MCF 10A (cell line): ENCODE measurements at regions of chrX and their contacts with region 1.

Region 1: GRCh38 chrX:139932901-139933796 is at the start of gene ATP11C:
- DNase-seq: peak; percentile 85
- H3K4me3 Mint-ChIP-seq: peak within 1 kb of the TSS; percentile 76
- H3K27ac Mint-ChIP-seq: peak within 1 kb of the TSS; percentile 90
- H3K4me1 Mint-ChIP-seq: peaks cover 4% of the 10 kb centered on the region
- H3K27me3 Mint-ChIP-seq: no peaks in the 10 kb centered on the region
- CTCF ChIP-seq: no peak
- total RNA-seq, gene ATP11C: 19.0 and 19.5 TPM in 2 replicates

Region 2: GRCh38 chrX:139826065-139827044 is 106.8 kb before region 1 on chrX:
- CTCF ChIA-PET with region 1: no interaction called
- POLR2A ChIA-PET with region 1: interaction called, 12 read pairs
- intact Hi-C with region 1: loop called (anchors 1 kb)
- DNase-seq: peak; percentile 76
- H3K4me3 Mint-ChIP-seq: no peak overlapping the region
- H3K27ac Mint-ChIP-seq: peak overlapping the region; percentile 66
- H3K4me1 Mint-ChIP-seq: peaks cover 8% of the 10 kb centered on the region
- H3K27me3 Mint-ChIP-seq: no peaks in the 10 kb centered on the region
- CTCF ChIP-seq: no peak

Region 3: DNA sequence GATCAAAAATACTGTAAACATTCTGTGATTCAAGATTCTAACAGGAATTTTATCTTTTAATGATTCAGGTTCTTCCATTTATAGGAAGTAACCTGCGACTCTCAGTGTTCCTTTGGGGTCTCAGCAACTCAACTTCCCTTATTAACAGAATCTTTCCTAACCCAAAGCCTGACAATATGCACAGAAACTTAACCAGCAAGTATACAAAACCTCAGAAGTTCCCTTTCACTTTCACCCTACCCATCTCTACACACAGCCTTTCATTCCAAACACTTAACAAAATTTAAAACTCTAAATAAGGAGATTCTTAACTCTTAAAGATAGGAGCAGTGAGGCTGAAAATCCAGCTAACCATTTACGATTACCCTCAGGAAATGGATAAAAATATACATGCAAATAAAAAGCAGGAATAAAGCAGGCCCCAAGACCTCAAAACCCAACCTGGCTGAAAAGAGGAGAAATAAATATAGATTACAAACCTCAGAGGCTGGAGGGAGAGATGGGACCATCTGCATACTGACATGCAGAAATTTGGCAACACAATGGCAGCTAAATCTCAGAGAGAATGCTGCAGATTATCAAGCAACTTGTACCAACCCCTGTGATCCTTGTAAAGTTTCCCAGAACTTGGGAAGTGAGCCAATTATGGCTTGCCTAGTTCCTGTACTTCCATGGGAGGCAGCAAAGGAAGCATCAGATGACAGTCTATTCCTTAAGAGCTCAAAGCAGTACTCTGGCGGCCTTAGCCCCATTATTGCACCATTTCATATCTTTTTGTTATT is 101.3 kb before region 1 on chrX:
- CTCF ChIA-PET with region 1: no interaction called
- POLR2A ChIA-PET with region 1: interaction called, 12 read pairs
- intact Hi-C with region 1: loop called (anchors 2 kb)
- DNase-seq: peak; percentile 81
- H3K4me3 Mint-ChIP-seq: no peak overlapping the region
- H3K27ac Mint-ChIP-seq: no peak overlapping the region
- H3K4me1 Mint-ChIP-seq: peaks cover 11% of the 10 kb centered on the region
- H3K27me3 Mint-ChIP-seq: no peaks in the 10 kb centered on the region
- CTCF ChIP-seq: no peak